Tibial artery (tissue), 4 donors: ENCODE measurements at regions of chr13 and their contacts with region 1.

Region 1: DNA sequence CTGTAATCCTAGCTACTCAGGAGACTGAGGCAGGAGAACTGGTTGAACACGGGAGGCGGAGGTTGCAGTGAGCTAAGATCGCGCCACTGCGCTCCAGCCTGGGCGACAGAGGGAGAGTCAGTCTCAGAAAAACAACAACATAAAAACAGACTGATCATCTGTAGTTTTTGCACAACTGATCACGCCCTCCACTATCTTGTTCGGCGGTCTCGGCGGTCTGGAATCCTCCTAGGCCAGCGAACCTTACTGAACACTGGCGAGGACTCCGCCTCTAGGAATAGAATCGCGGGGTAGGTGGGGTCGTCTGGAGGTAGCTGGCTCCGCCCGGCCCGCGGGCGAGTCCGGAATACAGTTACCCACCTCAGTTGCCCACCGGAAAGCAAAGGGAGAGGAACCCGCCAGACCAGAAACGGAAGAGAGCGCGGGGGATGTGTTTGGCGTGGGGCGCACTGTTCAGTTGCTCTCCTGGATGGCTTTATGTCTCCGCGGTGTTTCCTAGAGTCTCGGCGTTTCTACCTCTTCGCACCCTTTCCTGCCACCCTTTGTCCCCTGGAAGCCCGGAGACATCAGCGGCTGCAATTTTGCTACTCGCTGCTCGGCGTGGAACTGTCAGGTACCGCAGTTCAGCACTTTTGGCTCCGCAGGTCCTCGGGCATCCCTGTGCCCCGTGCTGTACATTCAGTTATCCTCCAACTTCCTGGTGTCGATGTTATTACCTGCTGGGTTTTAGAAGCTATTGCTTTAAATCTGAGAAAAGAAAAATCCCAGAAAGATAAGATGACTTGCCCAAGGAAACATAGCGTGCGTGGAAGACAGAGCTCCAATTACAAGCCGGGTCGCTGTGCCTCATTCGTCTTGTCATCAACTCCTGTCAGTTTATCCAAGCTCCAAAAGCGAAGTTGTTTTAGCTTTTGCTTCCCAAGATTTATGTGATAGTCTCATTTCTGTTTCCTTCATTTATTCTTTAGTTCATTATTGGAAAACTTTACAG is 24.9 kb upstream of the HNRNPA1L2 start:
- DNase-seq: peak; percentile 78 to 89
- H3K4me3 ChIP-seq: peak overlapping the region; percentile 63 to 84
- H3K27ac ChIP-seq: peak overlapping the region; percentile 82 to 90
- H3K4me1 ChIP-seq: peaks cover 0 to 20% (median 8%) of the 10 kb centered on the region in 4 donors
- H3K27me3 ChIP-seq: no peaks in the 10 kb centered on the region
- CTCF ChIP-seq: no peak

Region 2: DNA sequence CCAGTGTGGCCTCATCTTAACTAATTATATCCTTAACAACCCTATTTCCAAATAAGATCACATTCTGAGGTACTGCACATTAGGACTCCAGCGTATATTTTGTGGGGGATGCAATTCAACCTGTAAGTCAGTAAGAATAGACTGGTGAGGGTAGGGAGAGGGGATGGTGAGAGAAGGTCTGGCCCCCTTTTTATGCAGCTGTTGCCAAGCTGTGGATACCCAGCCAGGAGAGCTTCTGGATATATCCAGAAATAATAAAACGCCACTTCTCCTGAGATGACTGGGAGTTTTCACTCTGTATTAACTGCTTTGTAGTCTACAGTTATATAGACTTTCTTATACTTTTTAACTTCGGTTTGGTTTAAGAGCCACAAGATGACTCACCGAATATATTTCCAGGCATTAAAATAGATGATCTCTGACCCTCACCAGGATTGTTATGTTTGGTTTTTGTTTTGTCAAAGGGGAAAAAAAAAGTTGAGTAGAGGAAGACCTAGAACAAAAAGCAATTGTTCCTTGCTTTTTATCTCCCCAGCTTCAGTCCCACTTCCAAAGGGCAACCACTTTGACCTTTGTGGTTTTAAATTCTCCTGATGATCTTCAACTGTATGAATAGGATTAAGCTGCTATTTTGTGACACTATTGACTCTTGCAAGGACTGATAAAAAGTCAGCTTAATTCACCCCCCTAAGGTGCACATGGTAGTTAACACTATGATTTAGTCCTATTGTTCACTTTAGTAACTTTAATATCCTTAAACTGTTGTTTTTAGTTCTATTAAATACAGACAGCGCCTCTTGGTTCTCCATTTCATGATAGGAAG is 454.9 kb before region 1 on chr13:
- intact Hi-C with region 1: no loop called
- DNase-seq: no peak
- H3K4me3 ChIP-seq: no peak overlapping the region
- H3K27ac ChIP-seq: no peak overlapping the region
- H3K4me1 ChIP-seq: peaks cover 0 to 23% (median 7%) of the 10 kb centered on the region in 4 donors
- H3K27me3 ChIP-seq: no peaks in the 10 kb centered on the region
- CTCF ChIP-seq: no peak

Region 3: DNA sequence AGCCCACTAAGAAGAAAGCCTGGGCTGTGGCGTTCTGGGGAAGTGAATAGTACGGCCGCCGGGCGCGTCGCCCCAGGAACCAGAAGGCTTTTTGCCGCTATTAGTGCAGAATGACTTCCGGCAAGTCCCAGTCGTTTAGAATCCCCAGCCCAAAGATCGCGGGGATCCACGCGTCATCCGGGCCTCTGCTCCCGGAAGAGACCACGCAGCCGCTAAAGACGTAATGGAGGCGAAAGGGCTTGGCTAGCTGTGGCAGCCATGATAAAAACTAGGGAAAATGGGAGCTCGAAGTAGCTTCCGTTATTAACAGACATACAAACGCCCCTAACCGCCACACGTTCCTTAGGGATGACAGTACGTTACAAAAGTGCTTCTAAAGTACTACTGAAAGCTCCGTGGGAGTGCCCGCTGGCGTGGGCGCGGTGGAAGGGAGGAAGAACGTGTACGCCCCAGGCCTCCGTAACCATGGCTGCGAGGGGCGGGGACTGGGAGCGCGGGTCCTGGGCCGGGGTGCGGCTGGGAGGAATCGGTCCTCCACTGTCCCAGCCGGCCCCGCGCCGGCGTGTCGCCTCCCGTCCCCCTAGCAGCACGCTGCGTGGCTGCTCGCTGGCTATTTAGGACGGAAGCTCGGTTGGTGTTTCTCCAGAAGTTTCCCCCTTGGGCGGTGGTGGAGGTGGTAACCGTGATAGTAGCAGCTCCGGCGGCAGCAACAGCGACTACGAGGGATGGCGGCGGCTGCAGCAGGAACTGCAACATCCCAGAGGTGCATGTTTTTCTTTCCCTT is 35.0 kb after region 1 on chr13 and contains the start of gene SUGT1:
- intact Hi-C with region 1: loop called (anchors 5 kb)
- DNase-seq: peak; percentile 97 to 98
- H3K4me3 ChIP-seq: peak within 1 kb of the TSS; percentile 79 to 83
- H3K27ac ChIP-seq: peak within 1 kb of the TSS; percentile 94 to 96
- H3K4me1 ChIP-seq: peaks cover 0 to 51% (median 33%) of the 10 kb centered on the region in 4 donors
- H3K27me3 ChIP-seq: no peaks in the 10 kb centered on the region
- CTCF ChIP-seq: peak; percentile 65 to 73